ENCODE measurements at regions of chr1 and their contacts with region 1.

Region 1: GRCh38 chr1:226912587-226913176 is 27.4 kb upstream of the COQ8A start:
- DNase-seq: peak; percentile 54 to 79 (median 69)
- ATAC-seq: peak; percentile 65 to 89 (median 85)
- H3K4me3 ChIP-seq: no peak overlapping the region
- H3K27ac ChIP-seq: peak overlapping the region in 4 of 12 donors; percentile 9 to 48 (median 26)
- H3K4me1 ChIP-seq: peaks cover 0 to 13% (median 1%) of the 10 kb centered on the region in 12 donors
- H3K27me3 ChIP-seq: no peaks in the 10 kb centered on the region
- CTCF ChIP-seq: peak; percentile 42 to 78 (median 66)
- POLR2A ChIP-seq: no peak

Region 2: GRCh38 chr1:226711976-226712741 is 200.5 kb before region 1 on chr1:
- intact Hi-C with region 1: no loop called
- DNase-seq: no peak
- ATAC-seq: peak in 3 of 4 donors; percentile 7 to 38 (median 29)
- H3K4me3 ChIP-seq: peak overlapping the region in 1 of 12 donors; percentile 10
- H3K27ac ChIP-seq: peak overlapping the region in 10 of 12 donors; percentile 45 to 76 (median 61)
- H3K4me1 ChIP-seq: peaks cover 5 to 75% (median 60%) of the 10 kb centered on the region in 12 donors
- H3K27me3 ChIP-seq: no peaks in the 10 kb centered on the region
- CTCF ChIP-seq: no peak
- POLR2A ChIP-seq: no peak

Region 3: GRCh38 chr1:226953175-226953800 is 40.6 kb after region 1 on chr1:
- intact Hi-C with region 1: no loop called
- DNase-seq: no peak
- ATAC-seq: no peak
- H3K4me3 ChIP-seq: no peak overlapping the region
- H3K27ac ChIP-seq: peak overlapping the region in 1 of 12 donors; percentile 11
- H3K4me1 ChIP-seq: peaks cover 0 to 63% (median 23%) of the 10 kb centered on the region in 12 donors
- H3K27me3 ChIP-seq: no peaks in the 10 kb centered on the region
- CTCF ChIP-seq: no peak
- POLR2A ChIP-seq: no peak

Region 4: GRCh38 chr1:226973898-226974543 is 61.3 kb after region 1 on chr1:
- intact Hi-C with region 1: loop called in 1 of 10 experiments (anchors 10 kb)
- DNase-seq: peak in 2 of 5 donors; percentile 67 to 75
- ATAC-seq: peak; percentile 11 to 72 (median 64)
- H3K4me3 ChIP-seq: no peak overlapping the region
- H3K27ac ChIP-seq: peak overlapping the region; percentile 80 to 97 (median 94)
- H3K4me1 ChIP-seq: peaks cover 0 to 53% (median 36%) of the 10 kb centered on the region in 12 donors
- H3K27me3 ChIP-seq: no peaks in the 10 kb centered on the region
- CTCF ChIP-seq: peak in 2 of 12 donors; percentile 9 to 16
- POLR2A ChIP-seq: no peak

Region 5: DNA sequence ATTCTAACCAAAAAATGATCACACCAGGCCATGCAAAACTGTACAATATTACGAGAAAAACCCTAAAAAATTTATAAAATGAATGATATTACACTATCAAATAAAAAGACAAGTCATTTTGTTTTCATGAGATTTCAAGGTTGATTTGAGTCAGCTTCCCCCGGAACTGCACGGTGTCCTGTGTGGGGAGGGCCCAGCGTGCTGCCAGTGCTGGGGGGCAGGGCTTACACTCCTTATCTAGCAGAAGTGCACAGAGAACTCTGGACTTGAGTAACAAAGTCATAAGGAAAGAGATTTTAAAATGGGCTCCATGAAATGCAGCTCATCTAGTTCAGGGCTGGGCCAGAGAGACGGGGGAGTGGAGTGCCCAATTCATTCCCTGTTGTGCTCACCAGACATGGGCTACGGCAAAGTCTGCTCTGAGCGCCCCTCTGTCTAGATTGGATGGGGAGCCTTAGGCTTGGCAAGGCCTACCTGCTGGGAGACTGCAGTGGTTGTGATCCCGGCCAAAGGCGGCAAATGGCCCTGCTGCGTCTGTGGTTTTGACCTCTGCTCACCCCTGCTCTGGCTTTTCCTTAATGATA is 77.5 kb after region 1 on chr1:
- intact Hi-C with region 1: loop called in 3 of 10 experiments (anchors 5 kb)
- DNase-seq: peak in 2 of 5 donors; percentile 18 to 38
- ATAC-seq: peak in 3 of 4 donors; percentile 19 to 37 (median 26)
- H3K4me3 ChIP-seq: no peak overlapping the region
- H3K27ac ChIP-seq: peak overlapping the region in 10 of 12 donors; percentile 9 to 94 (median 56)
- H3K4me1 ChIP-seq: peaks cover 0 to 75% (median 43%) of the 10 kb centered on the region in 12 donors
- H3K27me3 ChIP-seq: no peaks in the 10 kb centered on the region
- CTCF ChIP-seq: no peak
- POLR2A ChIP-seq: no peak

Region 6: DNA sequence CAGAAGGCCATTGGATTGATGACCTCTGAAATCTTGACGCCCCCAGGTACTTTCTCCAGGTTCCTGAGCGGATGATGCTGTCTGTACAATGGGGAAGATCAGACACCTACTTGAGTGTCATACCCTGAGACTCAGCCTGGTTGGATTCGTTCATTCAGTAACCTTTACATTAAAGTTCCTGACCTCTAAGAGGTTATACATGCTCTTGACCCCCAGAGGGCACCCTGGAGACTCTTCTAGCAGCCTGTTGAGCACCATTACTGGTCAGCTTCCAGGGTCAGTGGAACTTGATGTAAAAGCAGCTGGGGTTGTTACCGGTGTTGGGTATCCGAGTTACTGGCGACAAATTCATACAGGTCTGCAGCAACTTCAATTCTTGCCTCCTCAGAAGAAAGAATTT is 536.4 kb after region 1 on chr1:
- intact Hi-C with region 1: loop called in 2 of 10 experiments (anchors 10 kb)
- DNase-seq: no peak
- ATAC-seq: peak in 2 of 4 donors; percentile 14 to 24
- H3K4me3 ChIP-seq: no peak overlapping the region
- H3K27ac ChIP-seq: no peak overlapping the region
- H3K4me1 ChIP-seq: peaks cover 0 to 11% (median 2%) of the 10 kb centered on the region in 12 donors
- H3K27me3 ChIP-seq: peaks cover 0 to 14% (median 0%) of the 10 kb centered on the region in 9 donors
- CTCF ChIP-seq: peak in 11 of 12 donors; percentile 14 to 50 (median 32)
- POLR2A ChIP-seq: no peak

Measured in heart left ventricle (tissue), 16 donors.